ENCODE measurements at regions of chr20 and their contacts with region 1.

Region 1: GRCh38 chr20:57698117-57698866 is 11.5 kb downstream of the PMEPA1 start:
- DNase-seq: peak; percentile 72
- H3K4me3 Mint-ChIP-seq: peak overlapping the region; percentile 32
- H3K27ac Mint-ChIP-seq: peak overlapping the region; percentile 44
- H3K4me1 Mint-ChIP-seq: peaks cover 9% of the 10 kb centered on the region
- H3K27me3 Mint-ChIP-seq: peaks cover 9% of the 10 kb centered on the region

Region 2: DNA sequence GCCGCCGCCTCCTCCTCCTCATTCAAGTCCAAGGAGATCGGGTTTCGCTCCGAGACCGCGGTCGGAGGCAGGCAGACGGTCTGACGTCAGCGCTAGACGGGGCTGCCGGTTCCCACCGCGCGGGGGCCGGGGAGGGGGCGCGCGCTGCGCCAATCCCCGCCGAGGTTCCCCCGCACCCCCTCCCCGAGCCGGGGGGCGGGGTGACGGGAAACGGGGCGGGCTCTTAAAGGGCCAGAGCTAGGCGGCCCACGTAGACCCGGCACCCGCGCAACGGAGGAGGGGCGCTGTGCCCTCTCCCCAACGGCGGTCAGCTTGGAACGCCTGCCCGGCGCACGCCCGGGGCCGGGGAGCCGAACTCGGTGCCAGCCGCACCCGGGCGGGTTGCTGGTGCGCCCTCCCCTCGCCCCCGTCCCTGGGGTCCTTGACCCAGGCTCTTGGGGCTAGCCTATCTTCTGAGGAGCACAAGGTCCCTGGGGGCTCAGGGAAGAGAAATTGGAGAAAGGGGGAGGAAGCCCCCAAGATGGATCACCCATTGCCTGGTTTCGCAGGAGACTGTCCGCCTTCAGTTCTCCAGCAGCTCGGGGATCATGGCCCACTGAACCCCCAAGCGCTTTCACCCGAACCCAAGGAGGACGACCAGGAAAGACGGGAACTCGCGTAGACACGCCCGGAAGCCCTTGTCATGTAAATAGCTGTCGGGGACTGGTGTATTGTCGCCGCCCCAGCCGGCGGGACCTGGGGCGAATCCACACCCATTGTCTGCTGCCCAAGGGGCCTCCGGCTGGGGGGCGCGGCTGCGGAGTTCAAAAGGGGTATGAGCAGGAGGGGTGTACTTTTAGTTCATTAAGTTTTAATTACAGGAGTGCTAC is 11.9 kb after region 1 on chr20 and contains the start of gene PMEPA1:
- intact Hi-C with region 1: loop called (anchors 1 kb)
- DNase-seq: peak; percentile 96
- H3K4me3 Mint-ChIP-seq: peak within 1 kb of the TSS; percentile 80
- H3K27ac Mint-ChIP-seq: peak within 1 kb of the TSS; percentile 29
- H3K4me1 Mint-ChIP-seq: peaks cover 16% of the 10 kb centered on the region
- H3K27me3 Mint-ChIP-seq: peaks cover 46% of the 10 kb centered on the region
- total RNA-seq, gene PMEPA1: 0.66 and 0.82 TPM in 2 replicates

Region 3: GRCh38 chr20:57718490-57719271 is 20.4 kb after region 1 on chr20:
- intact Hi-C with region 1: loop called (anchors 1 kb)
- DNase-seq: peak; percentile 95
- H3K4me3 Mint-ChIP-seq: peak overlapping the region; percentile 43
- H3K27ac Mint-ChIP-seq: no peak overlapping the region
- H3K4me1 Mint-ChIP-seq: no peaks in the 10 kb centered on the region
- H3K27me3 Mint-ChIP-seq: peaks cover 29% of the 10 kb centered on the region

Region 4: GRCh38 chr20:57748601-57749130 is 50.4 kb after region 1 on chr20:
- intact Hi-C with region 1: loop called (anchors 1 kb)
- DNase-seq: peak; percentile 67
- H3K4me3 Mint-ChIP-seq: peak overlapping the region; percentile 56
- H3K27ac Mint-ChIP-seq: no peak overlapping the region
- H3K4me1 Mint-ChIP-seq: peaks cover 11% of the 10 kb centered on the region
- H3K27me3 Mint-ChIP-seq: peaks cover 43% of the 10 kb centered on the region